CD4-positive, alpha-beta T cell (primary cell): ENCODE measurements at regions of chr5 and their contacts with region 1.

Region 1: GRCh38 chr5:4128994-4129393 is 533.4 kb downstream of the IRX1 start:
- DNase-seq: no peak
- ATAC-seq: no peak
- H3K4me3 ChIP-seq: no peak overlapping the region
- H3K4me3 Mint-ChIP-seq: no peak overlapping the region
- H3K27ac ChIP-seq: no peak overlapping the region
- H3K27ac Mint-ChIP-seq: no peak overlapping the region
- H3K4me1 ChIP-seq: no peaks in the 10 kb centered on the region
- H3K4me1 Mint-ChIP-seq: no peaks in the 10 kb centered on the region
- H3K27me3 ChIP-seq: no peaks in the 10 kb centered on the region
- H3K27me3 Mint-ChIP-seq: no peaks in the 10 kb centered on the region
- CTCF ChIP-seq: no peak

Region 2: GRCh38 chr5:4053136-4053535 is 75.9 kb before region 1 on chr5:
- CTCF ChIA-PET with region 1: no interaction called
- POLR2A ChIA-PET with region 1: no interaction called
- intact Hi-C with region 1: no loop called
- DNase-seq: no peak
- ATAC-seq: no peak
- H3K4me3 ChIP-seq: no peak overlapping the region
- H3K4me3 Mint-ChIP-seq: no peak overlapping the region
- H3K27ac ChIP-seq: no peak overlapping the region
- H3K27ac Mint-ChIP-seq: no peak overlapping the region
- H3K4me1 ChIP-seq: no peaks in the 10 kb centered on the region
- H3K4me1 Mint-ChIP-seq: no peaks in the 10 kb centered on the region
- H3K27me3 ChIP-seq: no peaks in the 10 kb centered on the region
- H3K27me3 Mint-ChIP-seq: no peaks in the 10 kb centered on the region
- CTCF ChIP-seq: no peak

Region 3: GRCh38 chr5:4374866-4375265 is 245.9 kb after region 1 on chr5:
- CTCF ChIA-PET with region 1: no interaction called
- POLR2A ChIA-PET with region 1: no interaction called
- intact Hi-C with region 1: loop called in 1 of 2 experiments (anchors 5 kb)
- DNase-seq: no peak
- ATAC-seq: no peak
- H3K4me3 ChIP-seq: no peak overlapping the region
- H3K4me3 Mint-ChIP-seq: no peak overlapping the region
- H3K27ac ChIP-seq: no peak overlapping the region
- H3K27ac Mint-ChIP-seq: no peak overlapping the region
- H3K4me1 ChIP-seq: no peaks in the 10 kb centered on the region
- H3K4me1 Mint-ChIP-seq: no peaks in the 10 kb centered on the region
- H3K27me3 ChIP-seq: no peaks in the 10 kb centered on the region
- H3K27me3 Mint-ChIP-seq: no peaks in the 10 kb centered on the region
- CTCF ChIP-seq: no peak